GM10248 (cell line): ENCODE measurements at regions of chr2 and their contacts with region 1.

Region 1: GRCh38 chr2:207625018-207625907 is at the start of gene METTL21A:
- DNase-seq: peak; percentile 97
- CTCF ChIP-seq: peak; percentile 64

Region 2: GRCh38 chr2:207635468-207636200 is 10.4 kb after region 1 on chr2:
- CTCF ChIA-PET with region 1: interaction called, 29 read pairs
- POLR2A ChIA-PET with region 1: no interaction called
- DNase-seq: no peak
- CTCF ChIP-seq: no peak

Region 3: DNA sequence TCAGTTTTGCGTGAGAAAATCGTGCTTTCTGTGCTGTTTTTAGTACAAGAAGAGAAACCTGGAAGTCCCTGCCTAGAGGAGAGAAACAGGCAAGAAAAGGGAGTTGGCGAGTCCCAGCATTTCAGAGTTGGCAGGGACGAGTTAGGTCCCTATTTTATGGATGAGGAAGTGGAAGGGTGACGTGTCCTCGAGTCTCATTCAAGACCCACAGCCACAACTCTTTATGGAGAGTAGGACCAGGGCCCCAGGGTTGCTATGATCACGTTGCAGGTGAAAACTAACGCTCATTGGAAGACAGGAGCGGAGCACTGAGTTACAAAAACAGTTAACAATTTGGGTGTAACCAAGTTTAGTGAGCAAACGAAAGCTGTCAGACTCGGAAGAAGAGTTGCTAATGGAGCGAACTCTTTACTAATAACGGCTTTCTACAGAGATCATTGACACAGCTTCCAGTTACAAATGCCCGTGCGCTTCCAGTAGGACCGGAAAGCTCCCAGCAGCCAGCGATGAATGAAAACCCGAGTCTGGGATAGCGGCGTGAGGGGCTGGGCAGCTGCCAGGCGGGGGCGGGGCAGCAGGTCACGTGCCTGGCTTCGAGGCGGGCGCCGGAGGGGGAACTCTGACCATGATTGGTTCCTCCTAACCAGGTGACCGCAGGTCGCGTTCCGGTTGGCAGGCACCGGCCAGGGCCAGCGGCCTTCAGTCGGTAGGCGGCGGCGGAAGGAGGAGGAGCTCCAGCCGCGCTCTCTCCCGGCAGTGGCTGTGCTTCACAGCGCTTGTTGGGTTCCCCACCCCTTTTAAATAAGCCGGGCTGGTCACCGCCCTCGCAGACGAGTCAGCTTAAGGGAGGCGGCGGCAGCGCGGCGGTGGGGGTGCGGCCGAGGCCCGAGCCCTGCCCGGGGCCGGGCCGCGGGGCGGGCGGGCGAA is 85.8 kb after region 1 on chr2 and contains the start of gene CCNYL1:
- CTCF ChIA-PET with region 1: interaction called, 6 read pairs
- POLR2A ChIA-PET with region 1: interaction called, 15 read pairs
- DNase-seq: peak; percentile 100
- CTCF ChIP-seq: no peak

Region 4: DNA sequence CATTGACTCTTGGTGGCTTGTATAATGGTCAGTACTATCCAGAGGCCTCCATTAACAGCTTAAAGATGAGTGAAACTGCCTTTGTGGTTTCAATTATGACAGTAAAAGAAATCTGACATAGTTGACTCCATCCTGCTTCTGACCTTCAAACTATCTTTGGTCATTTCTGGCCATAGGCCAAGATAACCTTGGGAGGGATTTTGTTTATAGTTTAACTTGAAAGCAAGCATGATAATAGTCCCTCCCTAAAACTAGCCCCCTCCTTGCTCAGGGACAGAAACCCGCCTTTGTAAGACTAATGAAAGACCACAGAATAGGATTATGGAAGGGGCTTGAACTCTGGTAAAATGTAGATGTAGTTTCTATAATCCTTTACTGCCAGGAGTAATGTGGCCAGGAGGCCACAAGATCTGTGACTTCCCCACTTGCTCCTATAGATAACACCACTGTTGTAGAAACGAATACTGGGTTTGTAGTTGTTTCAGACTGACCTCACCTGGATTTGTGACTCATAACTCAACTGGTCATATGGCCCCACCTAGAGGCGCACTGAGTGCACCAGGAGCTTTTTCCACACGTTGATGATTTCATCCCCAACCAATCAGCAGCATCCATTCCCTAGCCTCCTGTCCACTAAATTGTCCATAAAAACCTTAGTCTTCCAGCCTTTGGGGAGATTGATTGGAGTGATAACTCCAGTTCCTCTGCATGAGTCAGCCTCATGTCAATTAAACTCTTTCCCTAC is 408.7 kb after region 1 on chr2:
- CTCF ChIA-PET with region 1: interaction called, 21 read pairs
- POLR2A ChIA-PET with region 1: no interaction called
- DNase-seq: peak; percentile 62
- CTCF ChIP-seq: peak; percentile 72